Activated CD4-positive, alpha-beta T cell treated with anti-CD3 and anti-CD28 coated beads for 36 hours (primary cell): ENCODE measurements at regions of chr2 and their contacts with region 1.

Region 1: DNA sequence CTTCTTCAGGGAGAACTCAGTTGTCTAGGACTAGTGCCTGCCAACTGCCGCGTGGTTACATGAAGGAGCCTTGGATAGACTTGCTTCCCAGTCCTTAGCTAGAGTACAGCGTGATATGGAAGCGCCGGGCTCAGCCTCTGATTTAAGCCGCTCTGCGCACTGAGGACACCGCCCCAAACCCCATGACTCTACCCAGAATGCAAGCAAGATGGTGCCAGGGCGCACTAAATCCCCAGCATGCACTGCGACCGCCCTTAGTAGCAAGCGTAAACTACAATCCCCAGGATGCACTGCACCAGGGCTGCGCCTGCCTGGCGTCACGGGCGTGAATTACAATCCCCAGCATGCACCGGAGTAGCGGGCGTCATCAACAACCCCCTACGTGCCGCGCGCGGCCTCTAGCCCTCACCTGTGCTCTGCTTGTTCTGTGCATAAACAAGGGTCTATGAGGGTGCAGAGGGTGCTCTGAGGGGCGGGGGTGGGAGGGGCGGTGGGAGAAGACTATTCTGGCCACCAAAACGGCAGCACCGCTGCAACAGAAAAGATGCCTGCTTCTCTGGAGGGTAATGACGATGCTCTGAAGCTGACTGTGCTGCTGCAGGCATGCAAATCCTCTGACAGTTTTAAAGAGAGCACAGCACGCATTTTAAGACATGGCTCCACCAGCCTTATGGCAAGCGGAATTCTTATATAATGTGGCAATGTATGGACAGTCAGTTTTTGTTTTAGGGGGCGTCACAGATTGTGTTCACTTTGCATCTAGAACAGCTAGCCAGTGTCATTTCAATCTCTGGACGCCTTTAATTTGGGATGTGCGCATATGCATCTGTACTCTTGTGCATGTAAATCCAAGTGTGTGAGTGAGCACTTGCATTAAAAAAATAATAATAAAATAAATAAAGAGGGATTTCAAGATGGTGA is 282.5 kb upstream of the MYT1L start:
- DNase-seq: peak; percentile 95
- ATAC-seq: peak; percentile 99
- H3K4me3 Mint-ChIP-seq: peak overlapping the region; percentile 72
- H3K27ac Mint-ChIP-seq: peak overlapping the region; percentile 88
- H3K4me1 Mint-ChIP-seq: peaks cover 4% of the 10 kb centered on the region
- H3K27me3 Mint-ChIP-seq: peaks cover 8% of the 10 kb centered on the region

Region 2: GRCh38 chr2:2057125-2057721 is 556.3 kb before region 1 on chr2:
- CTCF ChIA-PET with region 1: no interaction called
- POLR2A ChIA-PET with region 1: no interaction called
- intact Hi-C with region 1: loop called in 1 of 2 experiments (anchors 5 kb)
- DNase-seq: peak; percentile 89
- ATAC-seq: peak; percentile 95
- H3K4me3 Mint-ChIP-seq: no peak overlapping the region
- H3K27ac Mint-ChIP-seq: peak overlapping the region; percentile 75
- H3K4me1 Mint-ChIP-seq: peaks cover 17% of the 10 kb centered on the region
- H3K27me3 Mint-ChIP-seq: no peaks in the 10 kb centered on the region

Region 3: GRCh38 chr2:2681711-2682251 is 68.2 kb after region 1 on chr2:
- CTCF ChIA-PET with region 1: no interaction called
- POLR2A ChIA-PET with region 1: no interaction called
- intact Hi-C with region 1: loop called in 1 of 2 experiments (anchors 2 kb)
- DNase-seq: peak; percentile 46
- ATAC-seq: peak; percentile 75
- H3K4me3 Mint-ChIP-seq: no peak overlapping the region
- H3K27ac Mint-ChIP-seq: peak overlapping the region; percentile 61
- H3K4me1 Mint-ChIP-seq: peaks cover 46% of the 10 kb centered on the region
- H3K27me3 Mint-ChIP-seq: no peaks in the 10 kb centered on the region

Region 4: GRCh38 chr2:3379647-3380534 is 766.4 kb after region 1 on chr2 and contains the start of gene TRAPPC12:
- CTCF ChIA-PET with region 1: no interaction called
- POLR2A ChIA-PET with region 1: no interaction called
- intact Hi-C with region 1: loop called in 1 of 2 experiments (anchors 1 kb)
- DNase-seq: peak; percentile 95
- ATAC-seq: peak; percentile 70
- H3K4me3 Mint-ChIP-seq: peak within 1 kb of the TSS; percentile 98
- H3K27ac Mint-ChIP-seq: peak within 1 kb of the TSS; percentile 96
- H3K4me1 Mint-ChIP-seq: peaks cover 50% of the 10 kb centered on the region
- H3K27me3 Mint-ChIP-seq: no peaks in the 10 kb centered on the region
- total RNA-seq, gene TRAPPC12: 60.0 to 73.1 TPM

Region 5: DNA sequence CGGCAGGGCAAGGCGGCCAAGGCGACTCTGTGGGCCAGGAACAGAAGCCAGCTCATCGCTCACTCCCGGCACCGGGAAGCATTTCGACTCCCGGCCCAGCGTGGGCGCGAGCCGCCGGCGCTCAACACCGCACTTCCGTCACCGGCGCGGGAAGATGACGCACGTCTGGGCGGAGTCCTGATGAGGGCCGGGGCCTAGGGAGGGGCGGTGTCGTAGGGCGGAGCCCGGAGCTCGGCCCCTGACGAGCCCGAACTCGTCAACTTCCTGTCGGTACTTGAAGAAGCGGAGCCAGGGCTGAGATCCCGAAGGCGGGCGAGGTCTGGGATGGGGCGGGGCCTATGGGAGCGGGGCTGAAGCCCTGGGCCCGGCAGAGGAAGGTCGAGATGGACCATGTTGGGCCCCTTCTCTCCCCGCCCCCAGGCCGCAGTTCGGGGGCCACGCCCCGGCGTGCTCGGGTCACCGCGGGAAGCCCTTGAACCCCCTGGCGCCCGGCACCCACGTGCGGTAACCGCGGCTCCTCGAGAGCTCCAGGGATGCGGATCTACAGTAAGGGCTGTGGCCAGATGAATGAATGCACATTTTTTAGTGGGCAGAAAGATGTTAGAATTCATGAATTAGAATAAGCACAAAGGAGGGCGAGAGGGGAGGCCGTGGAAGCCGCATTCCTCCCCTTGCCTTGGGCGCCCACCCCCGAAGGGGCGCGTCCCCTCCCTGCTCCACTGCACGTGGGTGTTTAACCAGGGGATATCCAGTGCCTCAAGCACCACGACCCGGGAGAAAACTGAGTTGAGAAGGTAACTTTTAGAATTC is 944.9 kb after region 1 on chr2 and contains the start of gene RNASEH1:
- CTCF ChIA-PET with region 1: no interaction called
- POLR2A ChIA-PET with region 1: no interaction called
- intact Hi-C with region 1: loop called in 1 of 2 experiments (anchors 1 kb)
- DNase-seq: peak; percentile 99
- ATAC-seq: peak; percentile 99
- H3K4me3 Mint-ChIP-seq: peak within 1 kb of the TSS; percentile 91
- H3K27ac Mint-ChIP-seq: peak within 1 kb of the TSS; percentile 96
- H3K4me1 Mint-ChIP-seq: peaks cover 34% of the 10 kb centered on the region
- H3K27me3 Mint-ChIP-seq: no peaks in the 10 kb centered on the region
- total RNA-seq, gene RNASEH1: 14.6 to 24.0 TPM